Cardiac septum (tissue), 1 donor: ENCODE measurements at regions of chr4 and their contacts with region 1.

Region 1: DNA sequence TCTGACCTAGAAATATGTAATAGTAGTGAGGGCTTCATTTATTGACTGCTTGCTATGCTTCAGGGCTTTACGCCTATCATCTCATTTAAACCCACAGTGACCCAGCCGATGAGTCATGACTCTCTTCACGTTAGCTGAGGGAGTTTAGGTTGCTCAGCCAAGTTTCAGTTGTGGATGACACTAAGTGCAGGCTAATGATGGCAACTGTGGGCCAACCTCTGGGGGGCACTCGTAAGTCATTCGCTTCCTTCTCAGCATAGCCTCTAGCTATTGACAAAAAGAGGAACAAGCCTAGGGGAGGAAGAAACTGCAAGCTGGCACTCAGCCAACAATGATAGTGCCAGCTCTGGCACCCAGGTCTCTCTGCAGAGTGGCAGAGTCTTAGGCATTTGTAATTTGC is 325.0 kb downstream of the ARHGAP10 start:
- DNase-seq: no peak

Region 2: DNA sequence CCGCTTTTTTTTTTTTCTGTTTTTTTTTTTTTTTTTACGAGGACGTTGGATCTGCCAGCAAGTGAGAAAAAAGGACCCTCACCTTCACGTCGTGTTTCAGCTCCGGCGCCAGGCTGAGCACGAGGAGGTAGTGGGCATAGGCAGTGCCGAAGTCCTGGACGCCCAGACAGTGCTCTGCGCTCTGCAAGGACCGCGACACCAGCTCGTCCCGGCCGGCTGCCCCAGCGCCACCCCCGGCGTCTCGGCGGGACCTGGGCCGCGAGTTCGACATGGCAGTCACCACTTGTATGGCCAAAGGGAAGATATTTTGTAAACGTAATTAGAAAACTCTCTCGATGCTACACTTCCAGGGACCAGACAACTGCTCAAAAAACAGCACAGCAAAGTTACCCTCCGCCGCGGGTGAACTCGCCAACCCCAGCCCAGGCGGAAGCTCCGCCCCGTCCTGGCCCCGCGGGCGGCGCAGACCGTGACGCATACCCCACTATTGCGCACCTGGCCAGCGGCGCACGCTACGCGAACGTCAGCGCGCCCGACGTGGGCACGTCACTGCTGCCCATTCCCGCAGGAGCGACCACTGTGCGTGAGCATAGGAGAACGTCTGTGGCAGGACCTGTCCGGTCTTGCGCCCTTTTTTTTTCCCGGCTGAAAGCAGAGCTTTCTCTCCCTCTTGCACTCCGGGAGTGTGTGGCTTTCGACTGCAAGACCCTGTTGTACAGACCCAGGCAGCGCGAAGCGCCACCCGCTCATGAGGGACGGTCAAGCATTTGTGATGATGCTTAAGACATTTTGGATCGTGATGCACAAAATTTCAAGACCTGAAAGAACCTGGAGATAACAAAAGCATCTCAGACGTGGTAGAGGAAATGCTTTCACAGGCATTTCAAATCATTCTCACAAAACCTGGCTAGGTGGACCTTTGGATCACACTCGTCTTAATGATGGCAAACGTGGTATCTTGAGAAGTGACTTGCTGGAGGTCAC is 372.9 kb before region 1 on chr4 and contains the start of gene PRMT9:
- intact Hi-C with region 1: no loop called
- DNase-seq: peak; percentile 96
- total RNA-seq, gene PRMT9: 6.8 TPM

Region 3: GRCh38 chr4:147994076-147994475 is 62.8 kb before region 1 on chr4:
- intact Hi-C with region 1: loop called (anchors 5 kb)
- DNase-seq: no peak

Region 4: GRCh38 chr4:148216866-148217814 is 160.3 kb after region 1 on chr4:
- intact Hi-C with region 1: loop called (anchors 10 kb)
- DNase-seq: no peak